ENCODE measurements at regions of chr9 and their contacts with region 1.

Region 1: GRCh38 chr9:36450110-36450732 is 50.2 kb upstream of the RNF38 start:
- DNase-seq: peak; percentile 70
- H3K4me3 Mint-ChIP-seq: no peak overlapping the region
- H3K27ac Mint-ChIP-seq: no peak overlapping the region
- H3K4me1 Mint-ChIP-seq: peaks cover 6% of the 10 kb centered on the region
- H3K27me3 Mint-ChIP-seq: no peaks in the 10 kb centered on the region

Region 2: DNA sequence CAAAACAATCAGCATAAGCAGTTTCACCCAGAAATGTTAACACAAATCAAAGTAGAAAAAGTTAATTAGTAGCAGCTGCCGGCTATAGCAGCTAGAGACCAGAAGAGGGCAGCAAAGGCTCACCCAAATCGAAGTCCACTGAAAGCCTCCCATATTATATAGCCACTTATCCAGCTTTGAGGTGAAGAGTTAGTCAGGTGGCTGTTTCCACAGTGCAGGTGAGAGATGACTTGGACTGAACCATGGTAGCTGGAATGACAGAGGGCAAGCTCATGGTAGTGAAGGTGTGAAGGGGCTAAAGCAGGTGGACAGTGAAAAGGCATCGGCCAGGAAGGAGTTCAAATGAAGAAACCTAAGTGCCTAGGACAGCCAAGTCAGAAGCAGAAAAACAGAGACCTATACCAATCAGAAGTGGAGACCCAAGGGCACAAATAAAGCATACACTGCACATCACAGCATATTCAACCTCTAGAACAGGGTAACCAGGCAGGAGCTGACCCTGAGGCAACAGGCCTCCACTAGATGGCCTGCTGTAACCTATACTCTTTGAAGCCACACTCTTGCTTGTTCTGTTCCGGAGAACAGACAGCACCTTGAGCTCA is 43.0 kb before region 1 on chr9:
- intact Hi-C with region 1: loop called (anchors 1 kb)
- DNase-seq: peak; percentile 87
- H3K4me3 Mint-ChIP-seq: no peak overlapping the region
- H3K27ac Mint-ChIP-seq: no peak overlapping the region
- H3K4me1 Mint-ChIP-seq: peaks cover 10% of the 10 kb centered on the region
- H3K27me3 Mint-ChIP-seq: no peaks in the 10 kb centered on the region

Region 3: DNA sequence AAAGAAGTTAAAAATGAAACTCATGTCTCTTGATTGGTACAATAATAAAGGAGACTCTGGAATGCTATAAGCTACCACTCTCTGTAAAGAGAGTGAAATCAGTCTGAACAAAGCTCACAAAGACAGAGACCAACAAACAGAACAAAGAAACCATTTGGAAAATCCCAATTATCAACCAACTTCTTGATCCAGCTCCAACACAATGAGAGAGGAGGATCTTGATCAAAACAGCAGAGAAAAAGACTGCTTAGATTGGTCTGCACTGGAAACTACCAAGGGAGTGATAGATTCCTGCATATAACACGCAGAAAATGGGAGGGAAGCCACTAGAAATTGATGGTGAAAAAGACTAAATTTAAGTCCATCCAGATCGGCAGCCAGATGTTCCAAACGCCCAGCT is 27.0 kb before region 1 on chr9:
- intact Hi-C with region 1: no loop called
- DNase-seq: no peak
- H3K4me3 Mint-ChIP-seq: no peak overlapping the region
- H3K27ac Mint-ChIP-seq: no peak overlapping the region
- H3K4me1 Mint-ChIP-seq: peaks cover 13% of the 10 kb centered on the region
- H3K27me3 Mint-ChIP-seq: no peaks in the 10 kb centered on the region

Region 4: DNA sequence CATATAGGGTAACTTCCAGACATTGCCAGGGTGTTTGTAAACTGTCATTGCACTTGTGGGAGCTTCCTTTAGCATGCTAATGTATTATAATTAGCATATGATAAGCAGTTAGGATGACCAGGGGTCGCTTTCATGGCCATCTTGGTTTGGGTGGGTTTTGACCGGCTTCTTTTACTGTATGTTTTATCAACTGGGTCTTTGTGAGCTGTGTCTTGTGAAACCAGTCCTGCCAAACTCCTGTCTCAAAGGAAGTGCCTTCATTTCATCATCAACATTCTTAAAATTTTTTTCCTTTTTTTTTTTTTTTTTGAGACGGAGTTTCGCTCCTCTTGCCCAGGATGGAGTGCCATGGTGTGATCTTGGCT is 110.6 kb after region 1 on chr9:
- intact Hi-C with region 1: loop called (anchors 1 kb)
- DNase-seq: no peak
- H3K4me3 Mint-ChIP-seq: no peak overlapping the region
- H3K27ac Mint-ChIP-seq: no peak overlapping the region
- H3K4me1 Mint-ChIP-seq: peaks cover under 1% of the 10 kb centered on the region
- H3K27me3 Mint-ChIP-seq: peaks cover 2% of the 10 kb centered on the region